ENCODE measurements at regions of chr17 and their contacts with region 1.

Region 1: GRCh38 chr17:50841949-50842354 is 6.6 kb downstream of the WFIKKN2 start:
- DNase-seq: peak in 1 of 2 donors; percentile 58
- H3K4me3 ChIP-seq: no peak overlapping the region
- H3K27ac ChIP-seq: no peak overlapping the region
- H3K4me1 ChIP-seq: no peaks in the 10 kb centered on the region
- H3K27me3 ChIP-seq: no peaks in the 10 kb centered on the region
- CTCF ChIP-seq: peak; percentile 37 to 88 (median 83)
- POLR2A ChIP-seq: no peak

Region 2: GRCh38 chr17:50478391-50479381 is 363.3 kb before region 1 on chr17 and contains the start of gene RSAD1:
- intact Hi-C with region 1: loop called (anchors 10 kb)
- DNase-seq: no peak
- H3K4me3 ChIP-seq: peak within 1 kb of the TSS; percentile 60 to 81
- H3K27ac ChIP-seq: peak within 1 kb of the TSS; percentile 80
- H3K4me1 ChIP-seq: peaks cover 29% of the 10 kb centered on the region
- H3K27me3 ChIP-seq: no peaks in the 10 kb centered on the region
- CTCF ChIP-seq: peak; percentile 60 to 98 (median 83)
- POLR2A ChIP-seq: peak in 1 of 2 donors; percentile 70
- total RNA-seq, gene RSAD1: 37.3 TPM

Region 3: GRCh38 chr17:50547035-50547735 is 294.8 kb before region 1 on chr17 and contains the start of gene SPATA20:
- intact Hi-C with region 1: loop called (anchors 2 kb)
- DNase-seq: no peak
- H3K4me3 ChIP-seq: peak within 1 kb of the TSS; percentile 58 to 61
- H3K27ac ChIP-seq: peak within 1 kb of the TSS; percentile 93
- H3K4me1 ChIP-seq: peaks cover 26% of the 10 kb centered on the region
- H3K27me3 ChIP-seq: no peaks in the 10 kb centered on the region
- CTCF ChIP-seq: peak; percentile 89 to 99 (median 96)
- POLR2A ChIP-seq: peak in 1 of 2 donors; percentile 81
- total RNA-seq, gene SPATA20: 73.4 TPM

Region 4: GRCh38 chr17:50626037-50626574 is 215.8 kb before region 1 on chr17:
- intact Hi-C with region 1: loop called (anchors 5 kb)
- DNase-seq: no peak
- H3K4me3 ChIP-seq: no peak overlapping the region
- H3K27ac ChIP-seq: no peak overlapping the region
- H3K4me1 ChIP-seq: no peaks in the 10 kb centered on the region
- H3K27me3 ChIP-seq: no peaks in the 10 kb centered on the region
- CTCF ChIP-seq: peak; percentile 62 to 68 (median 67)
- POLR2A ChIP-seq: no peak

Region 5: GRCh38 chr17:50785946-50786570 is 55.9 kb before region 1 on chr17:
- intact Hi-C with region 1: loop called (anchors 5 kb)
- DNase-seq: no peak
- H3K4me3 ChIP-seq: no peak overlapping the region
- H3K27ac ChIP-seq: peak overlapping the region; percentile 34
- H3K4me1 ChIP-seq: peaks cover 30% of the 10 kb centered on the region
- H3K27me3 ChIP-seq: no peaks in the 10 kb centered on the region
- CTCF ChIP-seq: no peak
- POLR2A ChIP-seq: no peak

Region 6: DNA sequence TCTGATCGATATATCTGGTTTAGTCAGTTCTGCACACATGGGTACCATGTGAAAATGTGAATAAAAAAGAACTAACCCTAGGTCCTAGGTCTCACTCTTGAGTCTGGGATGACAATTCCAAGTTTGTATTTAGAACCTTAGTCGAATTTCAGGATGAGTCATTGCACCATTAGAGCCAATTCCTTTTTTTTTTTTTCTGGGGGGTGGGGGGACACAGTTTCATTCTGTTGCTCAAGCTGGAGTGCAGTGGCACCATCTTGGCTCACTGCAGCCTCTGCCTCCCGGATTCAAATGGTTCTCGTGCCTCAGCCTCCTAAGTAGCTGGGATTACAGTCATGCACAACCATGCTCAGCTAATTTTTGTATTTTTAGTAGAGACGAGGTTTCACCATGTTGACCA is 237.1 kb after region 1 on chr17:
- intact Hi-C with region 1: no loop called
- DNase-seq: no peak
- H3K4me3 ChIP-seq: no peak overlapping the region
- H3K27ac ChIP-seq: no peak overlapping the region
- H3K4me1 ChIP-seq: no peaks in the 10 kb centered on the region
- H3K27me3 ChIP-seq: no peaks in the 10 kb centered on the region
- CTCF ChIP-seq: no peak
- POLR2A ChIP-seq: no peak